Naive thymus-derived CD4-positive, alpha-beta T cell (primary cell): ENCODE measurements at regions of chr1 and their contacts with region 1.

Region 1: DNA sequence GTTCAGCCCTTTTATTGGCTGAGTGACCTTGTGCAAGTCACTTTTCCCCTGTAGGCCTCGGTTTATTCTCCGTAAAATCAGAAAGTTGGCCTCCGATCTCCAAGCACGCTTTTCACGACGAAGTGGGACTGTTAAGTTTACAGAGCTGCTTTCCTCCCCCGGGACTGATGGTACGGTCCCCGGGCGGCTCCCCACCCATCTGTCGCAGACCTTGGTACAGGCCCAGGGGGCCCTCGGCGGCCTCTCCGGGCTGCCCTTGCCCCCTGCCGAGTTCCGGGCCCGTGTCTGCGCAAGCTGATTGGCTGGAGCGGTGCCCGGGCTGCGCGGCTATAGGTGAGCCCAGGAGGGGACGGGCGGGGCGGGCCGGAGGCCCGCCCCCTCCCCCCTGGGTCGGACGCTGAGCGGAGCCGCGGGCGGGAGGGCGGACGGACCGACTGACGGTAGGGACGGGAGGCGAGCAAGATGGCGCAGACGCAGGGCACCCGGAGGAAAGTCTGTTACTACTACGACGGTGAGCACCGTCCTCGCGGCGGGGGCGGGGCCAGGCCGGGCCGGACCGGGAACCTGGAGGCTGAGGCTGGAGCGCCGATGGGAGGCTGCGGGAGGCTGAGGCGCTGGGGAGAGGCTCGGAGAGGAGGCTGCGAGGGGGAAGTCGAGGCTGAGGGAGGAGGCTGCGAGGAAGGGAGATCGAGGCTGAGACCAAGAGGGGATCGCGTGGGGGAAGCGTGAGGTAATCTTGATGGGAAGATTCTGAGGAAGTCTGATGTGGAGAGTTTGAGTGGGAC is at the start of gene HDAC1:
- DNase-seq: peak; percentile 91 to 97 (median 94)
- ATAC-seq: peak; percentile 98
- H3K4me3 ChIP-seq: peak within 1 kb of the TSS; percentile 92
- H3K4me3 Mint-ChIP-seq: peak within 1 kb of the TSS; percentile 94 to 100 (median 98)
- H3K27ac ChIP-seq: peak within 1 kb of the TSS; percentile 88
- H3K27ac Mint-ChIP-seq: peak within 1 kb of the TSS; percentile 94 to 99 (median 98)
- H3K4me1 ChIP-seq: peaks cover 38 to 46% of the 10 kb centered on the region in 2 donors
- H3K4me1 Mint-ChIP-seq: peaks cover 37 to 67% (median 48%) of the 10 kb centered on the region in 7 donors
- H3K27me3 ChIP-seq: no peaks in the 10 kb centered on the region
- H3K27me3 Mint-ChIP-seq: no peaks in the 10 kb centered on the region
- total RNA-seq, gene HDAC1: 81.8 to 205 (median 174) TPM

Region 2: GRCh38 chr1:32179443-32180185 is 112.3 kb before region 1 on chr1 and contains the start of gene TXLNA:
- CTCF ChIA-PET with region 1: no interaction called
- POLR2A ChIA-PET with region 1: interaction called, 3 read pairs
- intact Hi-C with region 1: loop called in 1 of 2 experiments (anchors 1 kb)
- DNase-seq: peak; percentile 80 to 93 (median 86)
- ATAC-seq: peak; percentile 91
- H3K4me3 ChIP-seq: peak within 1 kb of the TSS; percentile 89
- H3K4me3 Mint-ChIP-seq: peak within 1 kb of the TSS; percentile 86 to 94 (median 91)
- H3K27ac ChIP-seq: peak within 1 kb of the TSS; percentile 89
- H3K27ac Mint-ChIP-seq: peak within 1 kb of the TSS; percentile 84 to 98 (median 92)
- H3K4me1 ChIP-seq: peaks cover 17 to 21% of the 10 kb centered on the region in 2 donors
- H3K4me1 Mint-ChIP-seq: peaks cover 22 to 45% (median 38%) of the 10 kb centered on the region in 7 donors
- H3K27me3 ChIP-seq: no peaks in the 10 kb centered on the region
- H3K27me3 Mint-ChIP-seq: no peaks in the 10 kb centered on the region
- total RNA-seq, gene TXLNA: 16.7 to 83.3 (median 36.3) TPM

Region 3: GRCh38 chr1:32221980-32222755 is 69.7 kb before region 1 on chr1 and contains the starts of genes EIF3I and TMEM234:
- CTCF ChIA-PET with region 1: interaction called, 24 read pairs
- POLR2A ChIA-PET with region 1: interaction called, 6 read pairs
- intact Hi-C with region 1: loop called (anchors 1 kb)
- DNase-seq: peak; percentile 71 to 94 (median 89)
- ATAC-seq: peak; percentile 95
- H3K4me3 ChIP-seq: peak within 1 kb of the TSS; percentile 99
- H3K4me3 Mint-ChIP-seq: peak within 1 kb of the TSS; percentile 90 to 98 (median 97)
- H3K27ac ChIP-seq: peak within 1 kb of the TSS; percentile 99
- H3K27ac Mint-ChIP-seq: peak within 1 kb of the TSS; percentile 94 to 99 (median 98)
- H3K4me1 ChIP-seq: peaks cover 23 to 24% of the 10 kb centered on the region in 2 donors
- H3K4me1 Mint-ChIP-seq: peaks cover 14 to 57% (median 37%) of the 10 kb centered on the region in 7 donors
- H3K27me3 ChIP-seq: no peaks in the 10 kb centered on the region
- H3K27me3 Mint-ChIP-seq: no peaks in the 10 kb centered on the region
- total RNA-seq, gene EIF3I: 82.6 to 182 (median 104) TPM
- total RNA-seq, gene TMEM234: 15.9 to 29.6 (median 21.4) TPM

Region 4: GRCh38 chr1:32255072-32256071 is 36.5 kb before region 1 on chr1:
- CTCF ChIA-PET with region 1: interaction called, 10 read pairs
- POLR2A ChIA-PET with region 1: interaction called, 155 read pairs
- intact Hi-C with region 1: loop called in 1 of 2 experiments (anchors 1 kb)
- DNase-seq: peak in 5 of 9 donors; percentile 50 to 68 (median 62)
- ATAC-seq: peak; percentile 31
- H3K4me3 ChIP-seq: peak overlapping the region; percentile 55
- H3K4me3 Mint-ChIP-seq: peak overlapping the region; percentile 88 to 100 (median 98)
- H3K27ac ChIP-seq: peak overlapping the region; percentile 91
- H3K27ac Mint-ChIP-seq: peak overlapping the region; percentile 90 to 99 (median 97)
- H3K4me1 ChIP-seq: peaks cover 39 to 41% of the 10 kb centered on the region in 2 donors
- H3K4me1 Mint-ChIP-seq: peaks cover 24 to 56% (median 48%) of the 10 kb centered on the region in 7 donors
- H3K27me3 ChIP-seq: no peaks in the 10 kb centered on the region
- H3K27me3 Mint-ChIP-seq: no peaks in the 10 kb centered on the region

Region 5: GRCh38 chr1:32351399-32352238 is 59.7 kb after region 1 on chr1:
- CTCF ChIA-PET with region 1: no interaction called
- POLR2A ChIA-PET with region 1: interaction called, 6 read pairs
- intact Hi-C with region 1: loop called (anchors 1 kb)
- DNase-seq: peak; percentile 83 to 93 (median 92)
- ATAC-seq: peak; percentile 97
- H3K4me3 ChIP-seq: peak overlapping the region; percentile 62
- H3K4me3 Mint-ChIP-seq: peak overlapping the region; percentile 68 to 90 (median 85)
- H3K27ac ChIP-seq: peak overlapping the region; percentile 75
- H3K27ac Mint-ChIP-seq: peak overlapping the region; percentile 63 to 96 (median 91)
- H3K4me1 ChIP-seq: peaks cover 4 to 19% of the 10 kb centered on the region in 2 donors
- H3K4me1 Mint-ChIP-seq: peaks cover 35 to 65% (median 53%) of the 10 kb centered on the region in 7 donors
- H3K27me3 ChIP-seq: no peaks in the 10 kb centered on the region
- H3K27me3 Mint-ChIP-seq: peaks cover 0 to under 1% (median 0%) of the 10 kb centered on the region in 5 donors